Mammary epithelial cell (primary cell): ENCODE measurements at regions of chr1 and their contacts with region 1.

Region 1: GRCh38 chr1:220776720-220777326 is 9.9 kb upstream of the MTARC1 start:
- DNase-seq: peak; percentile 48
- H3K4me3 ChIP-seq: no peak overlapping the region
- H3K27ac ChIP-seq: no peak overlapping the region
- H3K4me1 ChIP-seq: no peaks in the 10 kb centered on the region
- H3K27me3 ChIP-seq: no peaks in the 10 kb centered on the region
- CTCF ChIP-seq: peak; percentile 93

Region 2: GRCh38 chr1:219837274-219837993 is 939.4 kb before region 1 on chr1:
- CTCF ChIA-PET with region 1: no interaction called
- dilution Hi-C with region 1: no loop called
- in situ Hi-C with region 1: loop called in 1 of 2 experiments (anchors 25 kb)
- intact Hi-C with region 1: loop called (anchors 2 kb)
- DNase-seq: peak; percentile 42
- H3K4me3 ChIP-seq: no peak overlapping the region
- H3K27ac ChIP-seq: no peak overlapping the region
- H3K4me1 ChIP-seq: no peaks in the 10 kb centered on the region
- H3K27me3 ChIP-seq: no peaks in the 10 kb centered on the region
- CTCF ChIP-seq: peak; percentile 51 to 64

Region 3: GRCh38 chr1:220089650-220090556 is 686.9 kb before region 1 on chr1 and contains the start of gene BPNT1:
- CTCF ChIA-PET with region 1: interaction called, 14 read pairs
- dilution Hi-C with region 1: no loop called
- in situ Hi-C with region 1: no loop called
- intact Hi-C with region 1: no loop called
- DNase-seq: peak; percentile 96
- H3K4me3 ChIP-seq: peak within 1 kb of the TSS; percentile 69 to 95 (median 91)
- H3K27ac ChIP-seq: peak within 1 kb of the TSS; percentile 39
- H3K4me1 ChIP-seq: peaks cover 5% of the 10 kb centered on the region
- H3K27me3 ChIP-seq: no peaks in the 10 kb centered on the region
- CTCF ChIP-seq: peak in 1 of 2 donors; percentile 1
- total RNA-seq, gene BPNT1: 27.7 to 32.2 TPM

Region 4: DNA sequence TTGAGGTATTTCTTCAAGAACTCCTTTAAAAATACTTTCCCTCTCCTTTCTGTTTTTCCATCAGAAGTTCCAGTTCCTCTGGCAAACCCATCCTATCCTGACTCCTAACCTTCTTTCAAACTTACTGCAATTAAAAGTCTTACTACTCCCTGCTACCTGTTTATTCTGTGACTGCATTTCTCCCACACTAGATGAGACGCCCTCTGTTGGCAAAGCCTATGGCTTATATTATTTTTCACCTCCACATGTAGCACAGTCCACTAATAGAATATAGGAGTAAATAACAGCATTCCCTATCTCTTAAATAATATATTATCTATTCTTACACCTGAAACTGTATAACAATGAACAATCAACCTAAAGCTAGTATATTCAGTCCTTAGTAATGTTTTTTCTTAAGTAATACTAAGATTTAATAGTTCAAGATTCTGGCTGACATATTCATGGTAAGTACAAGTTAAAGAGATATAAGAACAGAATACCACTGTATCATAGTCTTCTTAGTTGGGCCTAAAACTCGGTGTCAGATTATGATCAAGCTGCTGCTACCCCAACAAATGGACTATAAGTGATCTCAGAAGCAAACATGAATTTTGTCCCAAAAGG is 559.3 kb before region 1 on chr1:
- CTCF ChIA-PET with region 1: interaction called, 3 read pairs
- dilution Hi-C with region 1: no loop called
- in situ Hi-C with region 1: no loop called
- intact Hi-C with region 1: loop called (anchors 1 kb)
- DNase-seq: no peak
- H3K4me3 ChIP-seq: no peak overlapping the region
- H3K27ac ChIP-seq: no peak overlapping the region
- H3K4me1 ChIP-seq: peaks cover 6% of the 10 kb centered on the region
- H3K27me3 ChIP-seq: no peaks in the 10 kb centered on the region
- CTCF ChIP-seq: peak; percentile 38 to 59

Region 5: GRCh38 chr1:220294846-220295301 is 481.9 kb before region 1 on chr1:
- CTCF ChIA-PET with region 1: no interaction called
- dilution Hi-C with region 1: no loop called
- in situ Hi-C with region 1: loop called in 1 of 2 experiments (anchors 10 kb)
- intact Hi-C with region 1: loop called (anchors 1 kb)
- DNase-seq: peak; percentile 19
- H3K4me3 ChIP-seq: no peak overlapping the region
- H3K27ac ChIP-seq: no peak overlapping the region
- H3K4me1 ChIP-seq: no peaks in the 10 kb centered on the region
- H3K27me3 ChIP-seq: no peaks in the 10 kb centered on the region
- CTCF ChIP-seq: no peak

Region 6: DNA sequence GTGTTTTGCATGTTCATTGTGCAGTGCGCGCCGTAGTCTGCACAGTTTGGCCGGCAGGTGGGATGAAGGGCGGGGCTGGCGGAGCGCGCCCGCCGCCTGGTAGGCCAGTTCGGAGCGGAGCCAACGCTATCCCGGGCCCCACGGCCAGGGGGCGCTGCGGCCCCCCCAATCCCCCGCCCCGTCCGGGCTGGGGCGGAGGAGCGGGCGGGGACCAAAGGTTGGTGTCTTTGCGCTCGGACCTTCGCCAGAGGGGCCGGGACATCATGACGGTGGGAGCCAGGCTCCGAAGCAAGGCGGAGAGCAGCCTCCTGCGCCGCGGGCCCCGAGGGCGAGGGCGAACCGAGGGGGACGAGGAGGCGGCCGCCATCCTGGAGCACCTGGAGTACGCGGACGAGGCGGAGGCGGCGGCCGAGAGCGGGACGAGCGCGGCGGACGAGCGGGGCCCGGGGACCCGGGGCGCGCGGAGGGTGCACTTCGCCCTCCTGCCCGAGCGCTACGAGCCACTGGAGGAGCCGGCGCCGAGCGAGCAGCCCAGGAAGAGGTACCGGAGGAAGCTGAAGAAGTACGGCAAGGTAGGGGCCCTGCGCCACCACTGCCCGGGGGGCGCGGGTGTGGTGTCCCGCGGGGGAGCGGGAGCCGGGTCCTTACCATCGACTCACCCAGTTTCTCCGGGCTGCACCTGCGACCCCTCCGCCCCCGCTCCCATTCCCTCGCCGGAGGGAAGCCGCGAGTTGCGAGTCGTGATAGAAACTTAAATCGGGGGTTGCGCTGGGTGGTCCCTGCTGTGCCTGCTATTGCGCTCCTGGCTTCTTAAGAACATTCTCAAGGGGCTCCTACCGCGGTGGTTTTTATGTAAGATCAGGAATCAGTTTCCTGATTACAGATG is 86.4 kb before region 1 on chr1 and contains the start of gene C1orf115:
- CTCF ChIA-PET with region 1: no interaction called
- dilution Hi-C with region 1: no loop called
- in situ Hi-C with region 1: loop called in 1 of 2 experiments (anchors 10 kb)
- intact Hi-C with region 1: loop called (anchors 1 kb)
- DNase-seq: peak; percentile 70
- H3K4me3 ChIP-seq: peak within 1 kb of the TSS; percentile 40 to 72 (median 62)
- H3K27ac ChIP-seq: no peak within 1 kb of the TSS
- H3K4me1 ChIP-seq: no peaks in the 10 kb centered on the region
- H3K27me3 ChIP-seq: no peaks in the 10 kb centered on the region
- CTCF ChIP-seq: peak; percentile 64 to 98
- total RNA-seq, gene C1orf115: 0.83 to 1.3 TPM

Region 7: GRCh38 chr1:220803401-220804201 is 26.8 kb after region 1 on chr1:
- CTCF ChIA-PET with region 1: no interaction called
- dilution Hi-C with region 1: no loop called
- in situ Hi-C with region 1: no loop called
- intact Hi-C with region 1: loop called (anchors 1 kb)
- DNase-seq: no peak
- H3K4me3 ChIP-seq: no peak overlapping the region
- H3K27ac ChIP-seq: no peak overlapping the region
- H3K4me1 ChIP-seq: peaks cover 8% of the 10 kb centered on the region
- H3K27me3 ChIP-seq: no peaks in the 10 kb centered on the region
- CTCF ChIP-seq: peak; percentile 70 to 88